Activated CD8-positive, alpha-beta T cell treated with anti-CD3 and anti-CD28 coated beads for 36 hours (primary cell): ENCODE measurements at regions of chr1 and their contacts with region 1.

Region 1: DNA sequence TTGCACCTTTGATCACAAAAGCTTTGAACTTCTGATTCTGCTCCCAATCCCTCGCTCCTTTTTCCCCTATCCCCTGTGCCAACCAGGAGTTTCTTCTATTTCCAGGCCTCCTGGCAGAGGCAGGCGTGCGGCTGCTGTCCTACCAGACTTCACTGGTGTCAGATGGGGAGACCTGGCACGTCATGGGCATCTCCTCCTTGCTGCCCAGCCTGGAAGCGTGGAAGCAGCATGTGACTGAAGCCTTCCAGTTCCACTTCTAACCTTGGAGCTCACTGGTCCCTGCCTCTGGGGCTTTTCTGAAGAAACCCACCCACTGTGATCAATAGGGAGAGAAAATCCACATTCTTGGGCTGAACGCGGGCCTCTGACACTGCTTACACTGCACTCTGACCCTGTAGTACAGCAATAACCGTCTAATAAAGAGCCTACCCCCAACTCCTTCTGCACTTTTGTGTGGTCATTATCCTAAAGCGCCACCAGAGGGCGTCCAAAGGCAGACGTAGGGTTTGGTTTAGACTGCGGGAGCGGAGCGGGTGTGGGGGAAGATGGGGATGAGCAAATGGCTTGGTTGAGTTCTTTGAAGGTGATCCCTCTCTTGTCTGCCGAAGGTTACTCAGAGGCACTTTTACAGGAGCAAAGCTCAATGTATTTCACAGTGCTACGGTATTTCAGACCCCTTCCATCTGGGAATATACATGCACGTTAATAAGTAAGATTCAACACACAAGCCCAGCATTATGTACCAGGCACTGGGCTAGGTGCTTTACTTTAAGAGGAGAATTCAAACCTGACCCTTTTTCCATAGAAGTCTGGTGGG is 24.7 kb downstream of the HMGCS2 start:
- DNase-seq: peak; percentile 76
- ATAC-seq: peak; percentile 78
- H3K4me3 Mint-ChIP-seq: no peak overlapping the region
- H3K27ac Mint-ChIP-seq: no peak overlapping the region
- H3K4me1 Mint-ChIP-seq: peaks cover 22% of the 10 kb centered on the region
- H3K27me3 Mint-ChIP-seq: no peaks in the 10 kb centered on the region
- CTCF ChIP-seq: peak; percentile 79

Region 2: DNA sequence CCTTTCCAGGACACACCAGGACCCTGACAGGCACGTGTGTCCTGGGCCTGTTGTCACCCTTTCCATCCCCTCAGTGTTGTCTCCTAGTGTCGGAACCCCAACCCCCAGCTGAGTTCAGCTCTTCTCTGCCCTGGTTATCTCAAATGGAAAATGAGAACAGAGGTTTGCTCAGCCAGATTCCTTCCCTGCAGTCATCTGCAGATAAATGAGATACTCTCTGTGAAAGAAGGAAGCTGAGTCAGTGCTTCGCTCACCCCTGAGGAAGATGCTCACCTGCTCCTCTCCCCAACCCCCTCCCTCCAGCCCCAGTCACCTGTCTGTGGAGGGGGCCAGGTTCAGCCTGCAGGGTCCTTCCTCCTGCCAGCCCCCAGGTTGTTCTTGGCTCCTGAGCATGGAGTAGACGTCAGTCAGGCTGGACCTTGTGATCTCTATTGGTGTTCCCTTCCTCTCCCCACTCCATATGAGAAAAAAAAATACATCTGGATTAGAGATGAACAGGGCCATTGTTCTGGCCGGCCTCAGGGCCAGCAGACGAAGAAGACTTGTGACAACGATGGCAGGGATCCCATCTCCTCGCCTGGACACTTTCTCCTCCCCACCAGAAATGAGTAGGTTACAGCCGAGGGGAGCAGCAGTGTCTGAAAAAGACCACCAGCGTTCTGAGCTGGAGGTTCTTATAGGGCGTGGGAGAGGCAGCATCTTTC is 11.4 kb before region 1 on chr1:
- CTCF ChIA-PET with region 1: interaction called, 16 read pairs
- POLR2A ChIA-PET with region 1: interaction called, 43 read pairs
- intact Hi-C with region 1: no loop called
- DNase-seq: no peak
- ATAC-seq: no peak
- H3K4me3 Mint-ChIP-seq: no peak overlapping the region
- H3K27ac Mint-ChIP-seq: no peak overlapping the region
- H3K4me1 Mint-ChIP-seq: no peaks in the 10 kb centered on the region
- H3K27me3 Mint-ChIP-seq: no peaks in the 10 kb centered on the region
- CTCF ChIP-seq: no peak

Region 3: GRCh38 chr1:119758584-119758983 is 14.6 kb after region 1 on chr1:
- CTCF ChIA-PET with region 1: interaction called, 28 read pairs
- POLR2A ChIA-PET with region 1: no interaction called
- intact Hi-C with region 1: no loop called
- DNase-seq: no peak
- ATAC-seq: no peak
- H3K4me3 Mint-ChIP-seq: no peak overlapping the region
- H3K27ac Mint-ChIP-seq: no peak overlapping the region
- H3K4me1 Mint-ChIP-seq: no peaks in the 10 kb centered on the region
- H3K27me3 Mint-ChIP-seq: peaks cover 4% of the 10 kb centered on the region
- CTCF ChIP-seq: no peak

Region 4: GRCh38 chr1:119808972-119809550 is 65.1 kb after region 1 on chr1:
- CTCF ChIA-PET with region 1: interaction called, 18 read pairs
- POLR2A ChIA-PET with region 1: no interaction called
- intact Hi-C with region 1: no loop called
- DNase-seq: peak; percentile 85
- ATAC-seq: peak; percentile 97
- H3K4me3 Mint-ChIP-seq: no peak overlapping the region
- H3K27ac Mint-ChIP-seq: no peak overlapping the region
- H3K4me1 Mint-ChIP-seq: no peaks in the 10 kb centered on the region
- H3K27me3 Mint-ChIP-seq: peaks cover 5% of the 10 kb centered on the region
- CTCF ChIP-seq: peak; percentile 91

Region 5: DNA sequence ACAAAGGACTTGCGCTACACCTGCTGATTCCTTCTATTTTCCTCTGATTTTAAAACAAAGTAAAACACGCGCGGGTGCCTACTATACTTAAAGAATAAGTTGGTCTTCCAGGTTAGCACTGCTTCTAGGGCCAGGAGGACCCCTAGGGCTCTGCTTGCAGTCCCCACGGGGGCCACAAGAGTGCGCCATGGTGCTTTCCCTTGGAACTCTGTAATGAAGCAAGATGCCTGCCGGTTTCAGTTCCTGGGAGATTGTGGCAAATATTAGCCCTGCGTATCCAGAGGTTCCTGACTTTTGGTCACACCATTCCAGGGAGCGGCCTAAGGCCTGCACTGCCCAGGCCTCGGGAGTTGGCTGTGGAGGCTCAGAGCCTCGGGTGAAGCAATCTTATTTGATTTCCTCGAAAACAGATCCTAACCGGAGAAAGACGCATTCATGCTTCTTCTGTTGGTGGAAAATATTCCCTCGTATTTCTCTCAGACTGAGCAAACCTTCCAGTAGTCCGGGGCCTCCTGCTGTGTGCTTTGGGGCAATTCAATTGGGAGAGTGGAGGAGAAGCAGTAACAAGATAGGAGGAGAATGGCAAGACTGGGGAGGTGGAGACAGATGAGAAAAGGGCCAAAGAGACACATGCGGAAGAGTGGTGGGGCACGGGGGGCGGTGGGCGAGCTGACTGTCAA is 127.1 kb after region 1 on chr1:
- CTCF ChIA-PET with region 1: interaction called, 18 read pairs
- POLR2A ChIA-PET with region 1: interaction called, 3 read pairs
- intact Hi-C with region 1: no loop called
- DNase-seq: peak; percentile 84
- ATAC-seq: peak; percentile 81
- H3K4me3 Mint-ChIP-seq: no peak overlapping the region
- H3K27ac Mint-ChIP-seq: no peak overlapping the region
- H3K4me1 Mint-ChIP-seq: peaks cover 3% of the 10 kb centered on the region
- H3K27me3 Mint-ChIP-seq: peaks cover 9% of the 10 kb centered on the region
- CTCF ChIP-seq: peak; percentile 92